CD8-positive, alpha-beta memory T cell (primary cell): ENCODE measurements at regions of chr7 and their contacts with region 1.

Region 1: DNA sequence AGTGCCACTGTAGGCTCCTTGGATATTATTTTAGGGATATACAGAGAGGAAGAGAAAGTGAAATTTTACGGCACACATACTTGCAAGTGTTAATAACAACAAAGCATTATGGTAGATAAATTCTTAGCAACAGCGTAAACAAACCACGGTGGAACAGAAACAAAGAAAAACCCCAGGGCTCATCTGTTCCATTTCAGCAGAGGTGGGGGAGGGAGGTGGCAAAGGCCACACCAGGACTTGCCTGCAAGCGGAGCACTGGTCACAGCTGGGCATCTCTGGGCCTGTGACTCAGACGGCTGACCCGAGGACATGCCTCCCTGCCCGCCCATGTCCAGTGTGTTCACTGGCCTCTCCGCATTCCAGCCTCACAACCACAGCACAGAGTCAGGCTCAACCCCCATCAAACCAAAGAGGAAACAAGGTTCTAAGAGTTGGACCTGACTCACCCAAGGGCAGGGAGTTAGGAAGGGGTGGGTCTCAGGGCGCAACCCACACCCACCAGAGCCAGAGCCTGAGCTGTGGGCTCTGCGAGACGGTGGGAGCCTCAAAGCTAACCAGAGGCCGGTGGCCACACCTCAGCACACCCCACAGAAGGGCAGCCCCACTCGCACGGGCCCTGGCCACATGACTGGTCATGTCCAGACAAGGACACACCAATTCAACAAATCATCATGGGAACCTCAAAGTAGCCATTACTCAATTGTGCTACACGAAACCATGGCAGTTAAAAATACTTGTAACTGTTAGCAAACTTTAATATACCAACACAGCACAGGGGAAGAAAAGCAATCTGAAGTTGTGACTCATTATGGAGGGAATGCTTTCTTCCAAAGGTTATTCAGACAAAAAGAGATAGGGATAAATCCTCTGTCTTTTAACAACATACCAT is 10.7 kb downstream of the ESYT2 start:
- DNase-seq: peak; percentile 56 to 89 (median 84)
- H3K4me3 ChIP-seq: peak overlapping the region; percentile 39
- H3K4me3 Mint-ChIP-seq: peak overlapping the region; percentile 80 to 93 (median 87)
- H3K27ac ChIP-seq: peak overlapping the region; percentile 78
- H3K27ac Mint-ChIP-seq: peak overlapping the region; percentile 89 to 100 (median 98)
- H3K4me1 ChIP-seq: peaks cover 92% of the 10 kb centered on the region
- H3K4me1 Mint-ChIP-seq: peaks cover 88 to 94% (median 90%) of the 10 kb centered on the region in 3 donors
- H3K27me3 ChIP-seq: no peaks in the 10 kb centered on the region
- H3K27me3 Mint-ChIP-seq: peaks cover 0 to 4% of the 10 kb centered on the region in 2 donors

Region 2: DNA sequence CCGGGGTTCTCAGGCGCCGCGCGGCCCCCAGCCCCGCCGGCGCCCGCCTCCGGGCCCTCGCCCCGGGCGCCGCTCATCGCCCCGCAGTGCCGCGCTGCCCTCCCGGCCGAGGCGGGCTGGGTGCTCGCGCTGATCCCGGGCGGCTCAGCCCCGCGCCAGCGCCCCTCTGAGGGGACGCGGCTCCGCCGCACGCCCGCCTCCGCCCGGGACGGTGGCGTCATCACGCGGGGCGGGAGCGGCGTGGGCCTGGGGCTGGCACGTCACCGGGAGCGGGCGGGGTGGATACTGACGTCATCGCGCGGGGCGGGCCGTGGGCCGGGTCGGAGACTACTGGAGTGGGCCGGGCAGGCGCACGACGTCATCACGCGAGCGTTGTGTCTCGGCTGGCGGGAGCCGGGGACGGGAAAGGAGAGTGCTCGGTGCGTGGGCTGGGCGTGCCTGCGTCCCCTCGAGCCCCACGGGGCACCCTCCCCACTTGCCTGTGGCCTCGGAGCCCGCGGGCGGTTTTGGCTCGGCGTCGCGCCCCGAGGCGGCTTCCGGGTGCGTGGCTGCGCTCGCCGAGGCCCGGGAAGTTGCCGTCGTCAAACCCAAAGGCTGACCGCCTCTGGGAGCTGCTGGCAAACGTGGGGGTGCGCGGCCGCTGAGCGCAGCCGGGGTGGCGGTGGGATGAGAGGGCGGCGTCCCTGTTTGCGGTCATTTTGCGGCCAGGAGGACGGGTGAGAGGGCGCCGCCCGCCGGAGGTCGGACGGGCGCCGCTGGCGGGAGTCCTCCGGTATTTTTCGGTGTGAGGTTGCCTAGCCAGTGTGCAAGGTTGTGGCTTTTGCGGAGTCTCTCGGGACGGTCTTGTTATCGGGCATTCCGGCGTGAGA is 11.0 kb after region 1 on chr7 and contains the start of gene ESYT2:
- CTCF ChIA-PET with region 1: interaction called, 9 read pairs
- POLR2A ChIA-PET with region 1: interaction called, 13 read pairs
- DNase-seq: peak; percentile 98 to 100 (median 99)
- H3K4me3 ChIP-seq: peak within 1 kb of the TSS; percentile 73
- H3K4me3 Mint-ChIP-seq: peak within 1 kb of the TSS; percentile 85 to 98 (median 92)
- H3K27ac ChIP-seq: peak within 1 kb of the TSS; percentile 93
- H3K27ac Mint-ChIP-seq: peak within 1 kb of the TSS; percentile 91 to 99 (median 94)
- H3K4me1 ChIP-seq: peaks cover 22% of the 10 kb centered on the region
- H3K4me1 Mint-ChIP-seq: peaks cover 27 to 39% (median 38%) of the 10 kb centered on the region in 3 donors
- H3K27me3 ChIP-seq: no peaks in the 10 kb centered on the region
- H3K27me3 Mint-ChIP-seq: peaks cover 0 to 3% of the 10 kb centered on the region in 2 donors
- total RNA-seq, gene ESYT2: 55.6 to 56.1 TPM

Region 3: GRCh38 chr7:158957921-158958491 is 139.4 kb after region 1 on chr7:
- CTCF ChIA-PET with region 1: no interaction called
- POLR2A ChIA-PET with region 1: no interaction called
- DNase-seq: peak in 3 of 5 donors; percentile 10 to 44 (median 29)
- H3K4me3 ChIP-seq: peak overlapping the region; percentile 59
- H3K4me3 Mint-ChIP-seq: peak overlapping the region; percentile 63 to 88 (median 78)
- H3K27ac ChIP-seq: no peak overlapping the region
- H3K27ac Mint-ChIP-seq: peak overlapping the region in 3 of 8 donors; percentile 6 to 58 (median 18)
- H3K4me1 ChIP-seq: peaks cover 6% of the 10 kb centered on the region
- H3K4me1 Mint-ChIP-seq: peaks cover 12 to 15% (median 13%) of the 10 kb centered on the region in 3 donors
- H3K27me3 ChIP-seq: no peaks in the 10 kb centered on the region
- H3K27me3 Mint-ChIP-seq: peaks cover 10 to 16% of the 10 kb centered on the region in 2 donors